Transverse colon (tissue), 4 donors: ENCODE measurements at regions of chr14 and their contacts with region 1.

Region 1: DNA sequence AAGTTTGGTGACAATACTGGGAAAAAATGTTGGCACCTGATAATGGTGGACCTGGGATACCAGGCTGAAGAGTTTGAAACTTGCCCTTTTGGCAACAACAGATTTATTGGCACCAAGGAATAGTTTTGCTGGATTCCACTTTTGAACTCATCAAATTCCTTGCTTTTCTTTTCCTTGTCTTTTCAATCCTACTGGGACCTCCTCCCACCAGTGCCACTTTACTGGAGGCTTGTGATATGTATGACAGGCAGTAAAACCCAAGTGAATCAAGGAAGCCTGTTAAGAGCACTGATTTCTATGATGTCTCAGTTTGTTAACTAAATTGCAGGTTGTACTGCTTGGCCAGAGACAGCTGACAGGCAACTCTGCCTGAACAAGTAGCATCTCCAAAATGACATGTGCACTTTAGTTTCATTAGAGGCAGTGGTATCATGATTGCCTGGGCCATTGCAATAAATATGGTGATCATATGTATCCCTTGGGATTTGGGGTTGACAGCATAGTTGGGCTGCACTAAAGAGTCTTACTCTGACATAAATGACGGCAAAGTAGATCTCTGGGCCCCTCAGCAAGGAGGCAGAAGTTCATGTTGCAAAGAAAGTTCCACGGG is 565.4 kb downstream of the DIO2 start:
- DNase-seq: no peak
- H3K4me3 ChIP-seq: no peak overlapping the region
- H3K27ac ChIP-seq: no peak overlapping the region
- H3K4me1 ChIP-seq: no peaks in the 10 kb centered on the region
- H3K27me3 ChIP-seq: no peaks in the 10 kb centered on the region
- CTCF ChIP-seq: no peak
- EP300 ChIP-seq: no peak
- POLR2A ChIP-seq: no peak

Region 2: DNA sequence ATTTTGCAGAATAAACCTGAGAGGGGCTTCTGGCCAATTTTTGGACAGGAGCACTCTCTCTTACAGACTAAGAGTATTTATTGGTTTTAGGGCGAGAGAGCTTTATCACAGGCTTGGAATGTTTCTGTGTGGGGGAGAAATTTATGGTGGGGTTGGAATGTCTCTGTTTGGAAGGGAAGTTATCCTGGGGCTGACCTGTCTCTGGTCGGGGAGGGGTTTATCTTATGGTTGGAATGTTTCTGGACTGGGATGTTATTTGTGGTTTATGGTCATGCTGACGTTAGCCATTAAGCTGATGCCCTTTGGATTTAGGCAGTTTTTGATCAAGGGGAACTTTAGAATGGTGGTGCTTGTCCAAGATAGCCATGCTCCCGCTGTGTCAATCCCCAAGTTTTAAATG is 49.3 kb before region 1 on chr14:
- in situ Hi-C with region 1: no loop called
- intact Hi-C with region 1: loop called (anchors 2 kb)
- DNase-seq: no peak
- H3K4me3 ChIP-seq: no peak overlapping the region
- H3K27ac ChIP-seq: no peak overlapping the region
- H3K4me1 ChIP-seq: peaks cover 0 to 6% (median 3%) of the 10 kb centered on the region in 4 donors
- H3K27me3 ChIP-seq: no peaks in the 10 kb centered on the region
- CTCF ChIP-seq: no peak
- EP300 ChIP-seq: no peak
- POLR2A ChIP-seq: no peak

Region 3: GRCh38 chr14:80260645-80261044 is 614.8 kb after region 1 on chr14:
- in situ Hi-C with region 1: no loop called
- intact Hi-C with region 1: no loop called
- DNase-seq: no peak
- H3K4me3 ChIP-seq: no peak overlapping the region
- H3K27ac ChIP-seq: no peak overlapping the region
- H3K4me1 ChIP-seq: no peaks in the 10 kb centered on the region
- H3K27me3 ChIP-seq: no peaks in the 10 kb centered on the region
- CTCF ChIP-seq: no peak
- EP300 ChIP-seq: no peak
- POLR2A ChIP-seq: no peak

Region 4: DNA sequence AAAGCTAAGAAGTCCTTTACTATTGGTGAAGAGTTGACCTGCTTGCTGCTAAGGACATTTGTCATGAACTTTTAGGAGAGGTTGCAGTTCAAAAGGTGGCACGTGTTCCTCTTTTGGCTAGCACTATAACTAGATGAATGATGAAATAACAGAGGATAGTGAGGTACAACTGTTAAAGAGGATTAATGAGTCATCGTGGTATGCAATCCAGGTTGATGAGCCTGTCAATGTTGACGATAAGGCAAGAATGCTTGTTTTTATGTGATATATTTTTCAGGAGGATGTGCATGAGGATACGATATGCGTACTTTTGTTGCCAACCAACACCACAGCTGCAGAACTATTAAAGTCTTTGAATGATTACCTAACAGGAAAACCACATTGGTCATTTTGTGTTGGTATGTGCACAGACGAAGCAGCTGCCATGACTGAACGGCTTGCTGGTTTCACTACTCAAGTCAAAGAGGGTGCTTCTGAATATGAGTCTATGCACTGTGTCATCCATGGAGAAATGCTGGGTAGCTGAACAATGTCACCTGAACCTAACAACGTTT is 1285.1 kb after region 1 on chr14:
- in situ Hi-C with region 1: no loop called
- intact Hi-C with region 1: no loop called
- DNase-seq: peak; percentile 33
- H3K4me3 ChIP-seq: no peak overlapping the region
- H3K27ac ChIP-seq: peak overlapping the region in 3 of 4 donors; percentile 24 to 47 (median 46)
- H3K4me1 ChIP-seq: no peaks in the 10 kb centered on the region
- H3K27me3 ChIP-seq: no peaks in the 10 kb centered on the region
- CTCF ChIP-seq: no peak
- EP300 ChIP-seq: no peak
- POLR2A ChIP-seq: no peak